HEK293 (cell line): ENCODE measurements at regions of chr9 and their contacts with region 1.

Region 1: GRCh38 chr9:38160613-38161215 is 91.7 kb upstream of the SHB start:
- H3K4me3 ChIP-seq: no peak overlapping the region
- H3K27ac ChIP-seq: no peak overlapping the region
- H3K4me1 ChIP-seq: no peaks in the 10 kb centered on the region
- CTCF ChIP-seq: no peak

Region 2: DNA sequence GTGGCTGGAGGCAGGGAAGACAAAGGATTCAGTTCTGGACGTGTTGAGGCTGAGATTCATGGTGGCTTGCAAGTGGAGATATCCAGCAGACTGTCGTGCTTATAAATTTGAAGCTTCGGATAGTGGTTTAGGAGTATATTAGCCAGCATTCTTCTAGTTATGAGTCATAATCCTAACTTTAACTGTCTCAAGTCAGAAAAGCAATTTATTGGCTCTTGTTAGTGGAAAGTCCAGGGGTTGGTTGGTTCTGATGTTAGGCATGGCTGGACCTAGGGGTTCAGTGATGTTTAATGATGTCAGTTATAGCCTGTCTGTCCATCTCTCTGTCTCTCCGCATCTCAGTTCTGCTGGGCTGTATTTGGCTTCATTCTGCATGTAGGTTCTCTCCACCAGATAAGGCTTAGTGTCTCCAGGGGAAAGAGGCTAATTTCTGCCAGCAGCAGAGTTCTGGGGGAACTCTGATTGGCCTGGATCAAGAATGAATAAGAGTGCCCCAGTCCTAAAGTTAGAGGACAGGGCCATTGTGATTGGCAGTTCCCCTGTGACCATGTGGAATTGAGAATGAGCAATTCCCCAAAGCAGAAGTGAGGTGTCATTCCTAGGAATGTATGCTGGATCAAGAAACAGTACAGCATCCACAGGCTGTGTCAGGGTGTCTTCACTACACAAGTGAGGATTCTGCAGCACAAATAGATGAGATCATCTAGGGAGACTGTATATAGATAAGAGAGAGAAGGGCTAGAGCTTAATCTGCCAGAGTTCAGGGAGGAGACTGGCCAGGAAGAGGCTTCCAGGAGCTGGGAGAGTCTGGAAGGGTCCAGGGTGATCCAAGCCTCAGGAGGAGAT is 18.7 kb before region 1 on chr9:
- CTCF ChIA-PET with region 1: interaction called, 11 read pairs
- POLR2A ChIA-PET with region 1: interaction called, 3 read pairs
- H3K4me3 ChIP-seq: no peak overlapping the region
- H3K27ac ChIP-seq: no peak overlapping the region
- H3K4me1 ChIP-seq: peaks cover 3% of the 10 kb centered on the region; the same call in 1 of the 2 replicates
- CTCF ChIP-seq: no peak

Region 3: GRCh38 chr9:38172585-38172984 is 11.9 kb after region 1 on chr9:
- CTCF ChIA-PET with region 1: interaction called, 21 read pairs
- POLR2A ChIA-PET with region 1: no interaction called
- H3K4me3 ChIP-seq: no peak overlapping the region
- H3K27ac ChIP-seq: no peak overlapping the region
- H3K4me1 ChIP-seq: no peaks in the 10 kb centered on the region
- CTCF ChIP-seq: no peak

Region 4: GRCh38 chr9:38183994-38184568 is 23.4 kb after region 1 on chr9:
- CTCF ChIA-PET with region 1: interaction called, 24 read pairs
- POLR2A ChIA-PET with region 1: no interaction called
- H3K4me3 ChIP-seq: no peak overlapping the region
- H3K27ac ChIP-seq: no peak overlapping the region
- H3K4me1 ChIP-seq: peaks cover 5% of the 10 kb centered on the region; the same call in 1 of the 2 replicates
- CTCF ChIP-seq: no peak

Region 5: GRCh38 chr9:38257626-38258215 is 97.0 kb after region 1 on chr9:
- CTCF ChIA-PET with region 1: interaction called, 15 read pairs
- POLR2A ChIA-PET with region 1: no interaction called
- H3K4me3 ChIP-seq: no peak overlapping the region
- H3K27ac ChIP-seq: no peak overlapping the region
- H3K4me1 ChIP-seq: no peaks in the 10 kb centered on the region
- CTCF ChIP-seq: no peak